PC-9 (cell line): ENCODE measurements at regions of chr1 and their contacts with region 1.

Region 1: DNA sequence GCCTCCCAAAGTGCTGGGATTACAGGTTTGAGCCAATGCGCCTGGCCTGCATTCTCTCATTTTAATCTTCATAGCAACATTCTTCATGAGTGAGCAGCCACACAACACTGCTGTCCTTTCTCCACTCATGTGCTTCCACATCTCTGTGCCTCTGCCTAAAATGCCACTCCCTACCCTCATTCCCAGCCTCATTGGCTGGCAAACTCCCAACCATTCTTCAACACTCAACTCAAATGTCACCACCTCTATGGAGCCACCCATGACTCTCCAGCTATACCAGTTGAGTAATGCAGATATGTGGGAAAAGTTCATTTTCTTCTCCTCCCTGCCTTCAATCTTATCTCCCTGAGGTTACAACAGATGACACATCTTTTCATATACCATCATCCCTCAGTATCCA is 53.9 kb upstream of the ZC3H12A start:
- DNase-seq: no peak
- H3K4me3 ChIP-seq: no peak overlapping the region
- H3K27ac ChIP-seq: no peak overlapping the region
- H3K4me1 ChIP-seq: no peaks in the 10 kb centered on the region
- H3K27me3 ChIP-seq: peaks cover 80% of the 10 kb centered on the region
- CTCF ChIP-seq: no peak

Region 2: DNA sequence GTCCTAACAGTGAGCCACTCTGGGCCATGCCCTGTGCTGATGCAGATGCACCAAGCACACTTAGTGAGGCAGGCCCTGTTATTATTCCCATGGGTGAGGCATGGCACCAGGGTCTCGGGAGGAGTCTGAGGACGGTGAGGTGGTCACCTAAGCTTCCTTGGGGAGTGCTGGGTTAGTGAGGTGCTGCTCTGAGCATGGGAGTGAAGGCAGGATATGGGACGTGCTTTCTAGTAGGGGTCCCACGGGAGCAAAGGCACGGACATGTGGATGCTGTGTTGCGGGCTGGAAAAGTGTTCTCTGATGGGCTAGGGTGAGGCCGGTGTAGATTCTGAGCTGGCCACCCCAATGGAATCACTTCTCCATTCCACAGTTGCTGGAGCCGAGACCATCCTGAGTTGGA is 860.3 kb before region 1 on chr1:
- CTCF ChIA-PET with region 1: no interaction called
- POLR2A ChIA-PET with region 1: interaction called, 39 read pairs
- intact Hi-C with region 1: no loop called
- DNase-seq: no peak
- H3K4me3 ChIP-seq: no peak overlapping the region
- H3K27ac ChIP-seq: no peak overlapping the region
- H3K4me1 ChIP-seq: no peaks in the 10 kb centered on the region
- H3K27me3 ChIP-seq: peaks cover 84% of the 10 kb centered on the region
- CTCF ChIP-seq: no peak

Region 3: DNA sequence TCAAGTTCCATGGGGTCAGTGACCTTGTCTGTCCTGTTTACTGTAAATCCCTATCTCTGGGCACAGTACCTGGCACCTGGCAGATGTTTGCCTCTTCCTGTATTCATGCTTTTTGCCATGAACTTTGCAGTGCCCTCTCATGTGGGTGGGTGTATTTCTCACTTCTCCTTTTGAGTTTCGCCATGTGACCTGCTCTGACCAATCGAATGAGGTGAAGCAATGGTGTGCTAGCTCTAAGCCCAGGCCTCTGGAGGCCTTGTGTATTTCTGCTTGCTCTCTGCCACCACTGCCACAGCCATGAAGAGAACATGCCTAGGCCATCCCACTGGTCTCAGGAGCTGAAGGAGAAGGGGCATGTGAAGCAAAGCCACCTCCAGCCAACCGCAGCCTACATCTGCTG is 131.6 kb before region 1 on chr1:
- CTCF ChIA-PET with region 1: no interaction called
- POLR2A ChIA-PET with region 1: no interaction called
- intact Hi-C with region 1: no loop called
- DNase-seq: no peak
- H3K4me3 ChIP-seq: no peak overlapping the region
- H3K27ac ChIP-seq: no peak overlapping the region
- H3K4me1 ChIP-seq: no peaks in the 10 kb centered on the region
- H3K27me3 ChIP-seq: peaks cover 94% of the 10 kb centered on the region
- CTCF ChIP-seq: no peak